Posterior vena cava (tissue), 2 donors: ENCODE measurements at regions of chr2 and their contacts with region 1.

Region 1: GRCh38 chr2:152097801-152098495 is 896 bp downstream of the CACNB4 start:
- DNase-seq: no peak

Region 2: GRCh38 chr2:151258121-151258520 is 839.8 kb before region 1 on chr2:
- intact Hi-C with region 1: loop called in 1 of 2 experiments (anchors 5 kb)
- DNase-seq: no peak

Region 3: GRCh38 chr2:151716721-151717120 is 381.2 kb before region 1 on chr2:
- intact Hi-C with region 1: no loop called
- DNase-seq: no peak

Region 4: DNA sequence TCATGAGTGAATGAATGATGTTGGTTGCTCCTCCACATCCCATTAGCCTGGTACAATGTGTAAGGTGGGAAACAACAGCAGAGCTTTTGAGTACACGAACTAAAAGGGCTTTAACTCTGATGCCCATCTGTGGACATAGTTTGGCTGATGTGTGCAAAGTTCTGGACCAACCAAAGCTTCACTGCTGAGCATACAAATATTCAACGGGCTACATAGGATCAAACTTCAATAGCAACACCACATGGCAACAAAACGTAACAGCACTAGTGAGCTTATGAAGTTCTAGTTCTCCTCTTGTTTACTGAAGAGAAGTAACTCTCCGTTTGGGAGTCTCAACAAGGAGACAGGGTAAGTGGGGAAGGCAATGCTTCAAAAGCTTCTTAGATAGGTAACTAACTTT is 57.3 kb after region 1 on chr2:
- intact Hi-C with region 1: loop called in 1 of 2 experiments (anchors 2 kb)
- DNase-seq: no peak